Left cardiac atrium (tissue), 4 donors: ENCODE measurements at regions of chr12 and their contacts with region 1.

Region 1: DNA sequence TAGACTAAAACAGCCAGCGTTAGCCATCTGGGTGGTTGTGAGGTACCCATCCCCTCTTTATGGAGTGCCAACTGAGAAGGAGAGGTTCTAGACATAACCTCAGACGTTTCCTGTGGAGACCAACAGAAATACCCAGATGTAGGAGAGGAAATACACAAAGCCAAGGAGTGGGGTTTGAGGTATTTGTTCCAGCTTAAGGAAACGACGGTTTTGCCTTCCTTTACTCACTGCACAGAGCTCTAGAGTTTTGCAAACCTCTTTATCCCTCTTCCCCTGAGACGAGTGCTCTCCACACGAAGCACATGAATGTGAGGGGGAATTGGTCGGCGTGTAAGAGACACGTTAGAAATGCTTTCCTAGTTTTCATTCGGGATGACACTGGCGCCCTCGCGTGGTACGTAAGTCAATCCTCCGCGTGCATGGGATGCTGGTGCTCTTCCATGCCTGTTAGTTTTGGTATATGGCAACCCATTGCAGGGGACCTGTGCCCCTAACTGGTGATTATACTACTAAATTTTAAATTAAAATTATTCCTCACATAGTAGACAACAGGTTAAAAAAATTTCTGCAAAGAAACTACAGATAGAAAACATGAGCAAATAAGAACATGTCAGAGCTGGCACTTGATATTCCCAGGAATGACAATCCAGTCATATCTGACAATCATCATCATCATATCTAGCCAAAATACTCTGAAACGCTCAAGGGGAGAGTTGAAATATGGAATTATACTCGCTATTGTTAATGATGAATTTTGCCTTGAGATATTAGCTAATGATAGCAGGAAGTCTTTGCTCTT is 121.7 kb downstream of the PPM1H start:
- DNase-seq: peak; percentile 81
- ATAC-seq: peak; percentile 70 to 77

Region 2: DNA sequence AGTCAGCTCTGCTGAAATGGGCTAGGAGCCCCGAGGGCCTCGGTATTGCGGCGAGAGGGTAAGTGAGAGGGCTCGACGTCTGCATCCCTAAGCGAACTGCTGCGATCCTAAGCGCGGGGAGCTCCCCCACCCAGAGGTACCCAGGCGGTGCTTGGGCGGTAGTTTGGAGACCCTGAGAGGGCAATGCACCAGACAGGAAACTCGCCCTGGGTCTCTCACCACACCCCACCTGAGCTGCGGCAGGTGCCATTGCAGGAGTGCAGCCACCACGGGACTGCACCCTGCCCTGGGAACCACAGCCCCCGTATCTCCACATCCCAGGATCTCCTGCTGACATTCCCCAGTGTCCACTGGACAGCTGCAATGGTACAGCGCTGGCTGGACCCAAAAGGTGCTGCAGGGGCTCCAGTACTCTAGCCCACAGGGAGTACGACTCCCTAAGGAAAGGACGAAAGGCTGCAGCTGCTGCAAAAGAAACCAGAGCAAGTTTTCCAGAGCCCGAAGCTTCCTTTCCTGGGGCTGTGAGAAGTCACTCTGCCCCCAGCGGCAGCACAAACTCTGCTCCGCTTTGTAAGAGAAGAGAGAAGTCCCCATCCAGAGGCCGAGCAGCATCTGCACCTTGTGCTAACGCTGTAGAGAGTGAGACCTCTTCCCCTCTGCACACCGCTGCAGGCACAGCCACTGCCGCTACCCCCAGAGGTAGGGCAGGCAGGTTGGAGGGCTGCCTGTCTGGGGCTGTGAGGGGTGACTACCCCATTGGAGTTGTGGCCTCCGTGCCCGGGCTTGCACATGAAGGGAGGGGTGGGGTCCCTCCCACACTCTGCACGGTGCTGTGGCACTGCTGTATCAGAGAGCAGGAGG is 377.7 kb before region 1 on chr12:
- intact Hi-C with region 1: loop called in 1 of 2 experiments (anchors 5 kb)
- DNase-seq: peak; percentile 47
- ATAC-seq: peak; percentile 72 to 82

Region 3: GRCh38 chr12:62934799-62935674 is 121.8 kb after region 1 on chr12 and contains the start of gene PPM1H:
- intact Hi-C with region 1: loop called (anchors 5 to 10 kb)
- DNase-seq: peak; percentile 73
- ATAC-seq: peak; percentile 83 to 88
- total RNA-seq, gene PPM1H: 3.3 to 4.3 TPM

Region 4: GRCh38 chr12:62995097-62995496 is 181.9 kb after region 1 on chr12:
- intact Hi-C with region 1: no loop called
- DNase-seq: no peak
- ATAC-seq: no peak

Region 5: DNA sequence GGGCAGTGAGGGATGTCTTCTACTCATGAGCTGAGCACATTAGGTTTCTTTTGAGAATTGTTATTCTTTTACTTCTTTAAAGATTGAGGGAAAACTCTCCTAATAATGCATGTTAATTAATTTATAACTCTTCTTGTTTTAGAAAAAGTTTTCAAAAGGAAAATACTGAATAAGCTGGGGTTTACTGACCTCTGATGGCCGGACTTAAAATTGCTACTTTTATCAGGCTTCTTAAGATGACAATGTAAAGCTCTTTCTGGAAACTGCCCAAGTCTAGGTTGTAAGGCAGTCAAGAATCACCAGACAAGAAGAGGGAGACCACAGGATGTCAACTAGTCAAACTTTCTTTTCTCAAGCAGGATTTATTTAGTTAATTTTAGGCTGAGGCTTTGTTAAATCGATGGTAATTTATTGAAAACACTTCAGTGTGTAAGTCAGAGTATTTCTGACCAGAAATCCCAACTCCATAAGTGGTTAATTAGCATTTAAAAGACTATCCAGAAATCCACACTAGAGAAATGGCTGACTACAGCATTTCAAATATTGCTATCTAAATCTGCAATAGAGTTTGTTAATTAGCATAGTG is 255.7 kb after region 1 on chr12:
- intact Hi-C with region 1: loop called in 1 of 2 experiments (anchors 5 kb)
- DNase-seq: no peak
- ATAC-seq: no peak